ENCODE measurements at regions of chr9 and their contacts with region 1.

Region 1: GRCh38 chr9:103483471-103484103 is 488.5 kb downstream of the CYLC2 start:
- DNase-seq: no peak
- H3K4me3 ChIP-seq: no peak overlapping the region
- CTCF ChIP-seq: no peak
- POLR2A ChIP-seq: no peak

Region 2: GRCh38 chr9:104572612-104573011 is 1089.0 kb after region 1 on chr9:
- intact Hi-C with region 1: loop called (anchors 5 kb)
- DNase-seq: no peak
- H3K4me3 ChIP-seq: no peak overlapping the region
- CTCF ChIP-seq: no peak
- POLR2A ChIP-seq: no peak